Heart right ventricle (tissue), 16 donors: ENCODE measurements at regions of chr5 and their contacts with region 1.

Region 1: DNA sequence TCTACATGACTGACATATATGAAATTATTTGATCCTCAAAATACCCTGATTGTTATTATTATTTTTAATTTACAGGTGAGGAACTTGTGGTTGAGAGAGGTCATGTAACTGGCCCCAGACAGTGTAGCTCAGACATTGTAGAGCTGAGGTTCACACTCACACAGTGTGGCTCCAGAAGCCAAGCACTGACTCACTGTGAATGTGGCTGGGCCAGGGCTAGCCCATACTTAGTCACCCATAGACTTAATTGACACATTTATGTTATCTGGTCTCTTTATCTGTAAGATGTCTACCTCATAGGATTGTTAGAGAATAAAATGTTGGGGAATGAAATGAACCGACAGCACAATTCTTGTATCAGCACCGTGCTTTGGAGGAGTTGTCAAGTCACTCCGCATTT is 24.9 kb upstream of the CCDC112 start:
- DNase-seq: no peak
- ATAC-seq: no peak
- H3K4me3 ChIP-seq: no peak overlapping the region
- H3K27ac ChIP-seq: no peak overlapping the region
- H3K4me1 ChIP-seq: peaks cover 0 to 32% (median 9%) of the 10 kb centered on the region in 9 donors
- H3K27me3 ChIP-seq: no peaks in the 10 kb centered on the region
- CTCF ChIP-seq: no peak

Region 2: GRCh38 chr5:115160975-115161475 is 160.3 kb before region 1 on chr5:
- intact Hi-C with region 1: no loop called
- DNase-seq: no peak
- ATAC-seq: no peak
- H3K4me3 ChIP-seq: no peak overlapping the region
- H3K27ac ChIP-seq: no peak overlapping the region
- H3K4me1 ChIP-seq: no peaks in the 10 kb centered on the region
- H3K27me3 ChIP-seq: peaks cover 0 to 48% (median 37%) of the 10 kb centered on the region in 7 donors
- CTCF ChIP-seq: no peak

Region 3: GRCh38 chr5:115351356-115352195 is 30.3 kb after region 1 on chr5:
- intact Hi-C with region 1: loop called in 1 of 10 experiments (anchors 5 kb)
- DNase-seq: no peak
- ATAC-seq: no peak
- H3K4me3 ChIP-seq: no peak overlapping the region
- H3K27ac ChIP-seq: no peak overlapping the region
- H3K4me1 ChIP-seq: peaks cover 0 to 18% (median 4%) of the 10 kb centered on the region in 9 donors
- H3K27me3 ChIP-seq: no peaks in the 10 kb centered on the region
- CTCF ChIP-seq: no peak

Region 4: DNA sequence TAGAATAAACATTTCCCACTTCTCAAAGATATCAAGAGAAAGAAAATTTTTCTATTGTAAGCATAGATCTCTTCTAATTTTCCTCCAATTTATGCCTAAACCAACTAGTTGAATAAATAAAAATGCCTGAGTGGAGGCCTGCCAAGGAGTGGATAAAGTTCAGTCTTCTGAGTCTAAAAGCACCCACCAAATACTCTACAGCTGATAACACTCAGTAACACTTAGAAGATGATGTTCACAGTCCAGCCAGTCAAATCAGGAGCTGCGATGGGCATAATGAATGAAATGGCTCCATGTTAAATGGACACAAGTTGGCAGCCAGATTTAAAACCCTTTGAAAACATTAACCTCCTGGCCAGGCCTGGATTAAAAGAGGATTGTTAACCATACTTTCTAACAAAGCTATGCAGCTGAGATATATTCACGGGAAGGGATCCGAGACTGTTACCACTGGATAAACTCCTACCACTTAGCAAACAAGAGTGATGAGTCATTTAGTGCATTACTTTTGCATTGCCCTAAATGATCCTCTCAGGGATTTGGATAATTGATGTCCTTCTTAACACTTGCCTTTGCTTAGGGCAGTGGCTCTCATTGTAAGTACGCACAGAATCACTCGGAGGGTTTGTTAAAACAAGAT is 38.9 kb after region 1 on chr5:
- intact Hi-C with region 1: loop called in 1 of 10 experiments (anchors 5 kb)
- DNase-seq: no peak
- ATAC-seq: no peak
- H3K4me3 ChIP-seq: no peak overlapping the region
- H3K27ac ChIP-seq: no peak overlapping the region
- H3K4me1 ChIP-seq: peaks cover 0 to 4% (median 0%) of the 10 kb centered on the region in 9 donors
- H3K27me3 ChIP-seq: no peaks in the 10 kb centered on the region
- CTCF ChIP-seq: no peak

Region 5: DNA sequence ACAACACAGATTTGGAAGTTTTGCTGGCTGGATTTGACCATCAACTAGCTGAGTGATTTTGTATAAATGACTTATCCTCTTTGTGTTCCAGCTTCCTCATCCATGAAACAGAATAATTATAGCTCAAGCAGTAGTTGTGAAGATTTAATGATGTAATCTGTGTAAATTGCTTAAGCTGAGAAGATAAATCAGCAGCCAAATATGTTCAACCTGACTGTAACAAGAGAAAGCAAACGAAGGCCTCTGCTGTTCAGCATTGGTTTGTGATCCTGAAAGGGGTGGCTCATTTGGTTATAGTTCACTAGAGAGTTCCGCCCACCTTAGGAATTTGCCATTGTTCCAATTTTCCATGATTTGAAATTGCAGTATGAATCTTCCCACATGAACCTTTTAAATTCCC is 50.8 kb after region 1 on chr5:
- intact Hi-C with region 1: loop called in 4 of 10 experiments (anchors 5 to 10 kb)
- DNase-seq: no peak
- ATAC-seq: no peak
- H3K4me3 ChIP-seq: no peak overlapping the region
- H3K27ac ChIP-seq: peak overlapping the region in 3 of 10 donors; percentile 9 to 44 (median 32)
- H3K4me1 ChIP-seq: peaks cover 0 to 29% (median 5%) of the 10 kb centered on the region in 9 donors
- H3K27me3 ChIP-seq: no peaks in the 10 kb centered on the region
- CTCF ChIP-seq: no peak